ENCODE measurements at regions of chr1 and their contacts with region 1.

Region 1: DNA sequence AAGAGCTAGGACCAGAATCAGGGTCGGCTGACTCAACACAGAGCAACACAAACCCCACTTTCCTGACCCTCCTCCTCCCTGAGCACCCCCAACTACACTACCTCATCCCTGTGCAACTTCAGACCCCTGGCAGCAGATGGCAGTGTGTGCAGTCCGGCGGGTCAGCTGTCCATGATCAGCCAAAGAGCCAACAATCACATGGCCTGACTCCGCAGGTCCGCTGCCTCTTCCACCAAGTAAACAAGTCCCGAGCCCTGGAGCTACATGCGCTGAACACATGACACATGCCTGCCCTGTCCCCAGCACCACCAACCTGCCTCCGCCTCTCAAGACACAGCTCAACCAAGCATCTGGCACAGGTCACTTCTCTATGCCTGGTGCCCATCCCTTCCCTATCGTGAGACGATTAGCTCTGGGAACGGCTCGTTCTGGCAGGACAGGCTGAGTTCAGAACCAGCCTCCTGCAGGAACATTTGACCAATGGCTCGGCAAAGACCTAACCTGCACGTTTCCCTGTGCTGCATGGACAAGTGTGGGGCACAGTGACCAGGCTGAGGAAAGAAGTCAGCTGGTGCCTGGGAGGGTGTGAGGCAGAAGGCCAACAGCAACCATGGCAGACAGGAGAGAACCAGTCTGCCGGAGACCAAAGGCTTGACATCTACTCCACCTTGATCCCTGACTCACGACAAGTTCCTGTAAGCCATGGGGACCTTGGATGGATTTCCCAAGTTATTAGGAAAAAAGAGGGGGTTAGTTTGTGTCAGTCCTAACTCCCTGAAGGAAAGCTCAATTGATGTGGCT is 60.3 kb downstream of the CD46 start:
- DNase-seq: no peak
- H3K4me3 Mint-ChIP-seq: no peak overlapping the region
- H3K27ac Mint-ChIP-seq: peak overlapping the region; percentile 83
- H3K4me1 Mint-ChIP-seq: peaks cover 83% of the 10 kb centered on the region
- H3K27me3 Mint-ChIP-seq: no peaks in the 10 kb centered on the region

Region 2: GRCh38 chr1:207605444-207606361 is 206.4 kb before region 1 on chr1:
- CTCF ChIA-PET with region 1: no interaction called
- intact Hi-C with region 1: no loop called
- DNase-seq: no peak
- H3K4me3 Mint-ChIP-seq: no peak overlapping the region
- H3K27ac Mint-ChIP-seq: no peak overlapping the region
- H3K4me1 Mint-ChIP-seq: no peaks in the 10 kb centered on the region
- H3K27me3 Mint-ChIP-seq: no peaks in the 10 kb centered on the region

Region 3: DNA sequence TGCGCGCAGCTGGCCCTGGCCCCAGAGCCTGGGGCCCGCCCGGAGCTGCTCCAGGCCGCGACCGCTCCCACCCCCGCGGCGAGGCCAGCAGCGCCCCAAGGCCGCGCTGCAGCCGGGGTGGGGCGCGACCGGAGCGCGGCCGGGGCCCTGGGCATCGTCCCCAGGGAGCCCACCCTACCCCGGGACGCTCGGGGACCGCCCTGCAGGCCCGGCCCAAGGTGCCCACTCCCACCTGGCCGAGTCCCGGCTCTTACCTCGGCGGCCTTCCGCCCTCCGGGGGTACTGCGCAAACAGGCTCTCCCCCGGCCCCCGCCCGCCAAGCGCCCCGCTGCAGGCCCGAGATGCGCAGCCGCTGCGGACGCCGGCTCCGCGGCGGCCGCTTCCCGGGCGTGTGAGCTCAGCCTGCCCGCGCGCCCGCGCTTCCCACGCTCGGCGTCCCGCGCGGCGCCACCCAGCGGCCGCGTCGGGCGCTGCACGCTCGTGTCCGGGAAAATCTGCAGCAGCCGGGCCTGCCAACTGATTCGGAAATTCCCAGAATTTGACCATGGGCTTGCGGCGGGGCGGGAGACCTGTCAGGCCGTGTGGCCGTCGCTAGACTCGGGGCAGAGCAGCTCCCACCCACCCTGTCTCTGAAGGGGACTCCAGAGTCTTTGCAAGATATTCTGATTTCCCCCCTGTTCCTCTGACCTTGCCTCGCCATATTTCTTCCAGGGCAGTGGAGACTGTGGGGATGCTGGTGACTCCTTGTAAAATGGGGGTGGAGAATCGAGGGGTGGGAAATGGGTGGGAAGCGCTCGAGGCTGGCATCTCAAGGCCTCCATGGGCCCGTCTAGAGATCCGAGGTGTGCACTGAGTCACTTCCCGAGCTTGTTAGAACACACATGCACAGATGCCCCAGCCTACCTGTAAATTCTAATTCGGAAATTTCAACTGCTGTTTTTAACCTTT is 56.9 kb after region 1 on chr1:
- CTCF ChIA-PET with region 1: interaction called, 14 read pairs
- intact Hi-C with region 1: no loop called
- DNase-seq: peak; percentile 63
- H3K4me3 Mint-ChIP-seq: peak overlapping the region; percentile 92
- H3K27ac Mint-ChIP-seq: peak overlapping the region; percentile 92
- H3K4me1 Mint-ChIP-seq: peaks cover 81% of the 10 kb centered on the region
- H3K27me3 Mint-ChIP-seq: no peaks in the 10 kb centered on the region

Region 4: GRCh38 chr1:207941665-207942064 is 129.5 kb after region 1 on chr1:
- CTCF ChIA-PET with region 1: no interaction called
- intact Hi-C with region 1: no loop called
- DNase-seq: no peak
- H3K4me3 Mint-ChIP-seq: no peak overlapping the region
- H3K27ac Mint-ChIP-seq: no peak overlapping the region
- H3K4me1 Mint-ChIP-seq: no peaks in the 10 kb centered on the region
- H3K27me3 Mint-ChIP-seq: peaks cover 12% of the 10 kb centered on the region

Measured in activated naive CD4-positive, alpha-beta T cell treated with anti-CD3 and anti-CD28 coated beads for 36 hours (primary cell).